HEK293 (cell line): ENCODE measurements at regions of chr18 and their contacts with region 1.

Region 1: DNA sequence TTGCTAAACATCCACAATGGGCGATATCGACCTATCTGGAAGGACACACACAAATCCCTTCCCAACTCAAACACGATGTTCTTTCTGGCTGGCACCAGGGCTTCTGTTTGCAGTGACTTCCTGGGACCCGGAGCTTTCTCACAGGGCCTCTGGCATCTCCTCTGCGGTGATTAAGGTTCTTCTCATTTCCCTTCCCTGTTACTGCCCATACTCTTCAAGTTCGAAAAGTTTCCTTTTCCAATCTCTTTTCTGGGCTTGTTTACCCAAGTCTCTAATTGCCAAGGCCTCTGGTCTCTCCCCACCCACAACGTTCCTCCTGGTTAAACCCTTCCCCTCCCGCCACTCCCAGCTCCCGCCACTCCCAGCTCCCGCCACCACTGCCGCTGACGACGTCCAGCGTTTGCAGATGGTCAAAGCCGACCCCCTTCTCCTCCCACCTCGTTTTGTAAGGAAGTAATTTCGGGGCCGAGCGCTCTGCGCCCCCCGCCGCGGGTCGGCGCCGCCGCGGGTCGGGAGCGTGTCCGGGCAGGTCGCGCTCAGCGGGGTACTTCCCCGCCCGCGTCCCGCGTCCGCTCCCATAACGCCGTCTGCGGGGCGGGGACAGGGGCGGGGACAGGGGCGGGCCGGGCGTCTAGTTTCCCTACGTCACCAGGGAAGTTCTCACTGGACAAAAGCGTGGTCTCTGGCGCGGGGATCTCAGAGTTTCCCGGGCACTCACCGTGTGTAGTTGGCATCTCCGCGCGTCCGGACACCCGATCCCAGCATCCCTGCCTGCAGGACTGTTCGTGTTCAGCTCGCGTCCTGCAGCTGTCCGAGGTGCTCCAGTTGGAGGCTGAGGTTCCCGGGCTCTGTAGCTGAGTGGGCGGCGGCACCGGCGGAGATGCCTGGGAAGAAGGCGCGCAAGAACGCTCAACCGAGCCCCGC is at the start of gene PMAIP1:
- H3K4me3 ChIP-seq: peak within 1 kb of the TSS; percentile 61
- H3K27ac ChIP-seq: peak within 1 kb of the TSS; percentile 96
- H3K4me1 ChIP-seq: peaks cover 21% of the 10 kb centered on the region
- CTCF ChIP-seq: no peak

Region 2: GRCh38 chr18:59725142-59725541 is 174.4 kb before region 1 on chr18:
- CTCF ChIA-PET with region 1: no interaction called
- POLR2A ChIA-PET with region 1: no interaction called
- H3K4me3 ChIP-seq: no peak overlapping the region
- H3K27ac ChIP-seq: no peak overlapping the region
- H3K4me1 ChIP-seq: no peaks in the 10 kb centered on the region
- CTCF ChIP-seq: no peak

Region 3: GRCh38 chr18:59837586-59837985 is 62.0 kb before region 1 on chr18:
- CTCF ChIA-PET with region 1: interaction called, 33 read pairs
- POLR2A ChIA-PET with region 1: interaction called, 55 read pairs
- H3K4me3 ChIP-seq: no peak overlapping the region
- H3K27ac ChIP-seq: no peak overlapping the region
- H3K4me1 ChIP-seq: peaks cover 7% of the 10 kb centered on the region
- CTCF ChIP-seq: peak; percentile 92

Region 4: GRCh38 chr18:59876310-59876626 is 23.3 kb before region 1 on chr18:
- CTCF ChIA-PET with region 1: no interaction called
- POLR2A ChIA-PET with region 1: interaction called, 90 read pairs
- H3K4me3 ChIP-seq: no peak overlapping the region
- H3K27ac ChIP-seq: no peak overlapping the region
- H3K4me1 ChIP-seq: peaks cover 16% of the 10 kb centered on the region
- CTCF ChIP-seq: no peak

Region 5: DNA sequence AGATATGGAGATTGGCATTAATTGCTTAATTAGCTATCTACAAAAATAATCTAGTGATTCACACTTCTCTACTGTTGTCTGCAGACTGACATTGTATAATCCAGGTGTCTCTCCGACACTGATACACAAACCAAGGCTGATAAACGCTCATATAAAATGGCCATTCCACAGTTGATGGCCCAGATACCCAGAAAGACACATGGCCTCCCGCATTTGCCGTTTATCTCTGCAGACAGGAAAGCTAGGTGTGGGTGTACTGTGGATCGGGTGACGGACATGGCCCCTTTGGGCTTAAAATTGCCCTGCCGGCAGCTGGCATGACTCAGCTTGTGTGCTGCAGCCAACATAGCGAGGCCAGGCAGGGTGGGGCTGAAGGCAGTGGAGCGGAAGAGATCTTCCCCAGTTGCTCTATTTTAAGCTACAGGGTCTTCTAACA is 18.8 kb after region 1 on chr18:
- CTCF ChIA-PET with region 1: interaction called, 5 read pairs
- POLR2A ChIA-PET with region 1: interaction called, 34 read pairs
- H3K4me3 ChIP-seq: no peak overlapping the region
- H3K27ac ChIP-seq: peak overlapping the region; percentile 71; the same call in 1 of the 2 replicates
- H3K4me1 ChIP-seq: peaks cover 11% of the 10 kb centered on the region
- CTCF ChIP-seq: no peak

Region 6: GRCh38 chr18:59988098-59988706 is 88.6 kb after region 1 on chr18:
- CTCF ChIA-PET with region 1: interaction called, 6 read pairs
- POLR2A ChIA-PET with region 1: interaction called, 54 read pairs
- H3K4me3 ChIP-seq: no peak overlapping the region
- H3K27ac ChIP-seq: no peak overlapping the region
- H3K4me1 ChIP-seq: peaks cover 10% of the 10 kb centered on the region
- CTCF ChIP-seq: peak; percentile 67

Region 7: GRCh38 chr18:60322591-60322990 is 423.0 kb after region 1 on chr18:
- CTCF ChIA-PET with region 1: no interaction called
- POLR2A ChIA-PET with region 1: no interaction called
- H3K4me3 ChIP-seq: no peak overlapping the region
- H3K27ac ChIP-seq: no peak overlapping the region
- H3K4me1 ChIP-seq: no peaks in the 10 kb centered on the region
- CTCF ChIP-seq: no peak